Posterior cingulate gyrus (tissue), 11 donors: ENCODE measurements at regions of chr10 and their contacts with region 1.

Region 1: DNA sequence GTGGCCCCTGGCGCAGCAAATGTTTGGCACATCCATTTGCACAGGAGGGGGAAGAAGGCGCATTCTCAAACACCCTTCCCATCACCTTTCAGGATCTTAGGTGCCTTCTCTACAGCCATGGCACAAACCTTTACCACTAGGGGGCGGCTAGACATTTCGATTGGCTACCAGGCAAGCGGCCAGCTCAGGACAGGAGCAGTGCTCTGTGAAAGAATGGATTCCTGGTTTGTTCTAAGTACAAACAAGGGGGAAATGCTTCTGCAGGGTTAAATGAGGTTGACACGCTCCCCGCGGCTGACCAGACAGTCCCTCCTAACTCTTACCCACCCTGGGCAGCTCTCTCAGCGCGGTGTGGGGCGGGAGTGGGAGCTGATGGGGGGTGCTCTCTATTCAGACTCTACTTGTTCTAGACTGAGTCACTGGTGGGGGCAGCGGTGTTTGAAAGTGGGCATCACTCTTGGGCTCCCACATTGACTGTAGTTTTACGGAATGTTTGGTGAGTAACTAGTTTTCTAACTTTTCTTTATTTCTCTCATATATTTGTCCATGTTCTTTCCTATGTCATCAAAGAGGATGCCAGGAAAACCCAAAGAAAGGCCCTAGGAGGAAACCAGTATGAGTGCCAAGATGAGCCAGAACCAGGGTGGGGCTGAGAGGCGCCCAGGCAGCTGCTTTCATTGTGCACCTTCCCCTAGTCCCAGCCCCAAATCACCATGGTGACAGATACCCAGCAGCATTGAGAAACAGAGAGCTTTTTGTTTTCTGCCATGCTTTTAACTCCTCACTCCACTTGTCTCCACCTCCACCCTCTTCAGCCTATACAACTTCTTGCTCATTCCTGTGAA is 61.4 kb upstream of the GPR158 start:
- DNase-seq: peak; percentile 63 to 95 (median 82)

Region 2: DNA sequence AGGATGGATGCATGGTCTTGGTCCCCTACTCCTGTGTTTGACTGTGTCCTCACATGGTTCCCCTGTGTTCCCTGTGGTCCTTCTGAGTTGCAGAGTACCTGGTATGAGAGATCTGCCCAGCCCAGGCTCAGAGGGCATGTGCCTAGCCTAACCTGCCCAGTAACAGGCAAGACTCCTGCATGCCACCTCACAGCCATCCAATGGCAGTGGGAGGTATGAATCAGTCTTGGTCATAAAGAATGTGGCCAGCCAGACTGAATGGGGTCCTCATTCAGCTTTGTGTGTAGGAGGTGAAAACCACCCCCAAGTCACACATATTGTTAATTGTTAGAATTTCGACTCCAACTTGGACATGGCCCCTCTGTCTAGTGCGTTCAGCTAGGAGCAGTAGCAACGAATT is 44.2 kb after region 1 on chr10:
- intact Hi-C with region 1: no loop called
- DNase-seq: no peak

Region 3: GRCh38 chr10:25174461-25175230 is 61.2 kb after region 1 on chr10 and contains the start of gene GPR158:
- intact Hi-C with region 1: loop called (anchors 5 kb)
- DNase-seq: peak; percentile 87 to 98 (median 90)

Region 4: DNA sequence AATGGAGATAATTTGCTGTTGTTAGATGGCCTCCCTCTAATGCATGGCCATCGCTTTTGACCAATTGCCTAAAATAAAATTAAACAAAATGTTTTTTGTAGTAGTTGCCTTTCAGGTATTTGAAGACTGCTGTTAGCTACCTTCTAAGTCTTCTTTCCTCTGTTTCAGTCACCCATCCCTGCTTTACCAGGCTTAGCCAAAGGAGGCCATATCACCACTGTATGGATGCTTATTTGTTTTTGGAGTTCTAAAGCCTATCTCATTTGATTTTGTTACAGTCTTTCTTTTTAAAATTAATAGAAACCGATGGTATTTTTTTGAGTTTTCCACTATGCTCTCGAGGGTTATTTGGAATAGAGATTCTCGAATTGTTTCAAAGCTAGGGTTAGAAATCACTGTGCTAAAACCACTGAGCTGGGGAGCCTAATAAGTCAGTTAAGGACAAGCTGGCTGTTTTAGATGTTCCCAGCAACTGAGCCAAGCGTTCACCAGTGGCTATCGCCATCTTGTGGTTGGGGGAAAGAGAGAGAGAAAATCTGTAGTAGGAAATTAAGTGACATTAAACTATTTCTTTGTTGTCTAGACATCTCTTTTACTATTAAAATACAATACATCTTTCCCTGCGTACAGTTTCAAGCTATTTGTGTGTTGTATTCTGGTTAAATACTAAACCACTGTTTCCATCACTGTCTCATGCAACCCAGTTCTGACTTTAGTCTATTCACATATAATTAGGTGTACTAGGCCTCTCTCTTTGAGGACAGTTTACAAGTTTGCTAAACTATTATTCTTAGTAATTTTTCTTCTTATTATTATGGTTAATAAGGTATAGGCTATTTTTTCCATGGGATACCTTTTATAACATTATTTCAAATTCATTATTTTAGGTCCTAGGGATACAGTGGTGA is 113.6 kb after region 1 on chr10:
- intact Hi-C with region 1: loop called (anchors 1 kb)
- DNase-seq: peak in 7 of 10 donors; percentile 17 to 89 (median 49)

Region 5: GRCh38 chr10:25682203-25682851 is 568.9 kb after region 1 on chr10:
- intact Hi-C with region 1: loop called (anchors 5 kb)
- DNase-seq: peak; percentile 31 to 95 (median 70)